Naive thymus-derived CD4-positive, alpha-beta T cell (primary cell): ENCODE measurements at regions of chr10 and their contacts with region 1.

Region 1: GRCh38 chr10:84194424-84195040 is at the start of gene CDHR1:
- DNase-seq: peak in 7 of 9 donors; percentile 12 to 49 (median 37)
- ATAC-seq: peak; percentile 79
- H3K4me3 ChIP-seq: peak within 1 kb of the TSS; percentile 52
- H3K4me3 Mint-ChIP-seq: peak within 1 kb of the TSS; percentile 47 to 75 (median 65)
- H3K27ac ChIP-seq: no peak within 1 kb of the TSS
- H3K27ac Mint-ChIP-seq: peak within 1 kb of the TSS in 1 of 9 donors; percentile 28
- H3K4me1 ChIP-seq: peaks cover 18 to 24% of the 10 kb centered on the region in 2 donors
- H3K4me1 Mint-ChIP-seq: peaks cover 12 to 28% (median 16%) of the 10 kb centered on the region in 7 donors
- H3K27me3 ChIP-seq: peaks cover 0 to 3% of the 10 kb centered on the region in 2 donors
- H3K27me3 Mint-ChIP-seq: peaks cover 0 to 59% (median 22%) of the 10 kb centered on the region in 5 donors
- total RNA-seq, gene CDHR1: 0.15 to 1.6 (median 0.43) TPM in 4 of 5 experiments, not detected in the other

Region 2: GRCh38 chr10:83104616-83105015 is 1089.9 kb before region 1 on chr10:
- CTCF ChIA-PET with region 1: no interaction called
- POLR2A ChIA-PET with region 1: no interaction called
- intact Hi-C with region 1: no loop called
- DNase-seq: no peak
- ATAC-seq: no peak
- H3K4me3 ChIP-seq: no peak overlapping the region
- H3K4me3 Mint-ChIP-seq: no peak overlapping the region
- H3K27ac ChIP-seq: no peak overlapping the region
- H3K27ac Mint-ChIP-seq: no peak overlapping the region
- H3K4me1 ChIP-seq: no peaks in the 10 kb centered on the region
- H3K4me1 Mint-ChIP-seq: no peaks in the 10 kb centered on the region
- H3K27me3 ChIP-seq: no peaks in the 10 kb centered on the region
- H3K27me3 Mint-ChIP-seq: no peaks in the 10 kb centered on the region

Region 3: DNA sequence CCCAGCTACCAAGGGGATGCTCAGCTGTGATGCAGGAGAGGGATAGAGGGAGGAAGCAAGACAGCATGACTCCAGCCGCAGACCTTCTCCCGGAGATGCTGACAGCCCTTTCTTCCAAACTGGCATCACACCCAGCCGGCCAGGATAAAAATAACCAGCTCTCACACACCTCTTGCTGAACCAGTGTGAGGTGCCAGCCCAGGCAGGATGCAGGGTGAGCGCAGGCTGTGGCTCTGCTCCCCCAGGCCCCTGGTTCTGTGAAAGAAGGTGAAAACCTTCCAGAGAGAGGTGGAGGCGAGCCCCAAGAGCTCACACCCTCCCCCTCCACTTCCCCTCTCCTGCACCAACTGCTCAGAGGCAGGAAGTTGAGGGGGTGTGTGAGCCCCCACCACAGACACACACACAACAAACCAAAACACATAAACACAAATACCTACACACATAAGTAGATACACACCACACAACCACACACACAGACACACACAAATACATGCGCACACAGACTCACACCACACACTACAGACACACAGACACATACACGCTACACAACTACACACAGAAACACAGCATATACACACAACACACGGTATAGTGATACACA is 16.9 kb before region 1 on chr10:
- CTCF ChIA-PET with region 1: interaction called, 5 read pairs
- POLR2A ChIA-PET with region 1: interaction called, 6 read pairs
- intact Hi-C with region 1: loop called in 1 of 2 experiments (anchors 1 kb)
- DNase-seq: peak in 7 of 9 donors; percentile 43 to 77 (median 67)
- ATAC-seq: peak; percentile 90
- H3K4me3 ChIP-seq: peak overlapping the region; percentile 30
- H3K4me3 Mint-ChIP-seq: no peak overlapping the region
- H3K27ac ChIP-seq: peak overlapping the region; percentile 43
- H3K27ac Mint-ChIP-seq: no peak overlapping the region
- H3K4me1 ChIP-seq: peaks cover 27 to 36% of the 10 kb centered on the region in 2 donors
- H3K4me1 Mint-ChIP-seq: peaks cover 0 to 12% (median 8%) of the 10 kb centered on the region in 7 donors
- H3K27me3 ChIP-seq: no peaks in the 10 kb centered on the region
- H3K27me3 Mint-ChIP-seq: no peaks in the 10 kb centered on the region